MCF 10A (cell line): ENCODE measurements at regions of chr11 and their contacts with region 1.

Region 1: DNA sequence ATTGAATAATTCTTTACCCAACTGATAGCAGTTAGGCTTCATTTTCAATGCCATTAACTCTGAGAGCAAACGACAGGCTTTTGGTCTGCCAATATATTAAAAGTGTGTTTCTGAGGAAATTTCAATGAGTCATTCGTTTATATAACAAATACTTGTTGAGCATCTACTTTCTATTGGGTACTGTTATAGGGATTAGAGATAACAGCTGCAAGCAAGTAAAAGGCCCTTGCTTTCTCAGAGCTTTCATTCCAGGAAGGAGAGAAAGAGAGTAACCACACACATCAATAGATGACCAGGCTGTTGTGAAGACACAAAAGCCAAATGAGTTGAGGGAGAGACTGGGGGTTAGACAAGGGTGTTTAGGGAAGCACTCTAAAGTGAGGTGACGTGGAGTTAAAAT is 35.7 kb downstream of the CD44 start:
- DNase-seq: peak; percentile 30
- H3K4me3 Mint-ChIP-seq: no peak overlapping the region
- H3K27ac Mint-ChIP-seq: peak overlapping the region; percentile 28
- H3K4me1 Mint-ChIP-seq: peaks cover 32% of the 10 kb centered on the region
- H3K27me3 Mint-ChIP-seq: no peaks in the 10 kb centered on the region
- CTCF ChIP-seq: no peak

Region 2: GRCh38 chr11:35158701-35159510 is 15.8 kb before region 1 on chr11:
- CTCF ChIA-PET with region 1: interaction called, 5 read pairs
- POLR2A ChIA-PET with region 1: interaction called, 22 read pairs
- intact Hi-C with region 1: no loop called
- DNase-seq: peak; percentile 90
- H3K4me3 Mint-ChIP-seq: peak overlapping the region; percentile 34
- H3K27ac Mint-ChIP-seq: peak overlapping the region; percentile 79
- H3K4me1 Mint-ChIP-seq: peaks cover 55% of the 10 kb centered on the region
- H3K27me3 Mint-ChIP-seq: no peaks in the 10 kb centered on the region
- CTCF ChIP-seq: no peak

Region 3: GRCh38 chr11:35321532-35322359 is 147.1 kb after region 1 on chr11:
- CTCF ChIA-PET with region 1: no interaction called
- POLR2A ChIA-PET with region 1: no interaction called
- intact Hi-C with region 1: no loop called
- DNase-seq: no peak
- H3K4me3 Mint-ChIP-seq: no peak overlapping the region
- H3K27ac Mint-ChIP-seq: no peak overlapping the region
- H3K4me1 Mint-ChIP-seq: peaks cover 16% of the 10 kb centered on the region
- H3K27me3 Mint-ChIP-seq: no peaks in the 10 kb centered on the region
- CTCF ChIP-seq: no peak